ENCODE measurements at regions of chr2 and their contacts with region 1.

Region 1: DNA sequence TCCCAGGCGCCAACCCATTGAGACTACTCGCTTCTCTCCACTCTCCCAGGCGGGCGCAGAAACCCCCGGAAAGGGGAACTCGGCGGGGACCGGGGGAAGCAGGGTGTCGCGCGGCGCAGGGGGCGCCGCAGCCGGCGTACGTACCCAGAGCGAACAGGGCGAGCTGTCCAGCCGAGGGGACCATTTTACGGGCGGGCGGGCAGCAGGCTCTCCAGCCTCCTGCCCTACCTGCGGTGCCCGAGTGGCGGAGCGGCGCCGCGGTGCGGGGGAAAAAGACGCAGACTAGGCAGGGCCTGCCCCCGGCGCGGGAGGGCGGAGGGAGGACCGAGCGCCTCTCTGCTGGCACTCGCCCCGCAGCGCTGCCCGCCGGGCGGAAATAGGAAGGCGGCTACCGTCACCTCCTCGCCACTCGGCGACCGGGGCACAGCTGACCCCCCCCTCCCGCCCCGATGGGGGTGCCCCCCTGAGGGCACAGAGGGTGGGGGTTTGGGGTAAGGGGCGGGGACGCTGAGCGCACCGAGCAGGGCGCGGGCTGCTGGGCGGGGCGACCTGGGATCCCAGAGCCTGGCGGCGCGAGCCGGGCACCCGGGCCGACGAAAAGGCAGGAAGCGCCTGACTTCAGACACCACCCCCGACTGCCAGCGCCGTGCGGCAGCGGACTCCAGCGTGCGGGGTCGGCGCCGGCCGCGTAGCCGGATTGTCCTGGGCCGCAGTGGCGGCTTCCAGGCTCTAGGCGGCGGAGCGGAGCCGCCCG is at the start of gene TGFA:
- DNase-seq: peak; percentile 54 to 87 (median 75)
- H3K4me3 ChIP-seq: peak within 1 kb of the TSS; percentile 58 to 85 (median 72)
- H3K27ac ChIP-seq: peak within 1 kb of the TSS; percentile 16 to 99 (median 91)
- H3K27me3 ChIP-seq: peaks cover 0 to 52% (median 11%) of the 10 kb centered on the region in 45 donors
- CTCF ChIP-seq: peak in 54 of 56 donors; percentile 27 to 84 (median 68)
- total RNA-seq, gene TGFA: 4.2 to 47.1 (median 12.5) TPM

Region 2: GRCh38 chr2:70498054-70498453 is 55.7 kb before region 1 on chr2:
- intact Hi-C with region 1: no loop called
- DNase-seq: no peak
- H3K4me3 ChIP-seq: no peak overlapping the region
- H3K27ac ChIP-seq: no peak overlapping the region
- H3K27me3 ChIP-seq: peaks cover 0 to 5% (median 0%) of the 10 kb centered on the region in 45 donors
- CTCF ChIP-seq: peak in 4 of 56 donors; percentile 8 to 15 (median 12)

Region 3: GRCh38 chr2:70616168-70616694 is 62.5 kb after region 1 on chr2:
- intact Hi-C with region 1: loop called (anchors 5 kb)
- DNase-seq: no peak
- H3K4me3 ChIP-seq: no peak overlapping the region
- H3K27ac ChIP-seq: no peak overlapping the region
- H3K27me3 ChIP-seq: peaks cover 0 to 3% (median 0%) of the 10 kb centered on the region in 45 donors
- CTCF ChIP-seq: no peak

Region 4: GRCh38 chr2:71181332-71181731 is 627.6 kb after region 1 on chr2:
- intact Hi-C with region 1: no loop called
- DNase-seq: no peak
- H3K4me3 ChIP-seq: no peak overlapping the region
- H3K27ac ChIP-seq: no peak overlapping the region
- H3K27me3 ChIP-seq: no peaks in the 10 kb centered on the region
- CTCF ChIP-seq: no peak

Measured in dorsolateral prefrontal cortex (tissue), 120 donors.